HEK293 (cell line): ENCODE measurements at regions of chr5 and their contacts with region 1.

Region 1: GRCh38 chr5:181223058-181223728 is at the start of gene TRIM41:
- H3K4me3 ChIP-seq: peak within 1 kb of the TSS; percentile 92
- H3K27ac ChIP-seq: peak within 1 kb of the TSS; percentile 85
- H3K4me1 ChIP-seq: no peaks in the 10 kb centered on the region
- CTCF ChIP-seq: peak; percentile 39; the same call in 1 of the 2 replicates

Region 2: DNA sequence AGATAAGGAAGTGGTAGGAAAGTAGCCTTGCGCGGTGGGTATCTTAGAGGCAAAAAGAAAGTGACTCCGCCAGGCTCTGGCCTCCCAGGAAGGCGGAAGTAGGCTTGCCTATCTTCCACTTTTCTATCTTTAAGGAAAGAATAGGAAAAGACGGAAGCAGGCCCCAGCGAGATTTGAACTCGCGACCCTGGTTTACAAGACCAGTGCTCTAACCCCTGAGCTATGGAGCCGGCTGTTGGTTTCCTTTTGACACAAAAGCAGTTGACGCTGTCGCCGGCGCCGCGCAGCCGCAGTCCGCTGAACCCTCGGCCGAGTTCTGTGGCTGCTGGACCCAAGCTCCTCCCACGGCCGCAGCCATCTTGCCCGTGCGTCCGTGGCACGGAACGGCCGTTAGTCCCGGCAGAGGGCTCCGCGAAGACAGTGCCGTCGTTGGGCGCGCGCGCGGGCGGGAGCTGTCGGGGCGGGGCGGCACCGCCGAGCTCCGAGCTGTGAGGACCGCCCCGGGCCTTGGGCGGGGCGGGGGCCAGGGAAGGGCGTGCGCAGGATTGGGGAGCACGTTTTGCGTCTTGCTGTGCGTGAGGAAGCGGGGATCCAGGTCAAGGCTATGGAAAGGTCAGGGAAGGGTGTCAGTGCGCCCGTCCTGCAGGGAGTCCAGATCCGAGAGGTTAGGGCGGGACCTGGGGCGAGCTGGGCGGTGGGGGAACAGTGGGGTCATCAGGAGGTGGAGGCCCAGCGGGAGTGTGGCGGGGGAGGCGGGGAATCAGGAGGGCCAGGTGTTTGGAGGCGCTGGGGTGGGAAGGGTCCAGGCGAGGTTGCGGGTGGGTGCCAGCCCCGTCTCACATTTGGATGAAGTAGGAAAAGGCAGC is 31.4 kb before region 1 on chr5:
- CTCF ChIA-PET with region 1: interaction called, 3 read pairs
- POLR2A ChIA-PET with region 1: interaction called, 29 read pairs
- H3K4me3 ChIP-seq: peak overlapping the region; percentile 75
- H3K27ac ChIP-seq: peak overlapping the region; percentile 59; the same call in 1 of the 2 replicates
- H3K4me1 ChIP-seq: no peaks in the 10 kb centered on the region
- CTCF ChIP-seq: no peak; the same call in 1 of the 2 replicates

Region 3: GRCh38 chr5:181207214-181208107 is 15.7 kb before region 1 on chr5:
- CTCF ChIA-PET with region 1: interaction called, 4 read pairs
- POLR2A ChIA-PET with region 1: interaction called, 25 read pairs
- H3K4me3 ChIP-seq: peak overlapping the region; percentile 61
- H3K27ac ChIP-seq: peak overlapping the region; percentile 35
- H3K4me1 ChIP-seq: no peaks in the 10 kb centered on the region
- CTCF ChIP-seq: peak; percentile 16; the same call in 1 of the 2 replicates

Region 4: DNA sequence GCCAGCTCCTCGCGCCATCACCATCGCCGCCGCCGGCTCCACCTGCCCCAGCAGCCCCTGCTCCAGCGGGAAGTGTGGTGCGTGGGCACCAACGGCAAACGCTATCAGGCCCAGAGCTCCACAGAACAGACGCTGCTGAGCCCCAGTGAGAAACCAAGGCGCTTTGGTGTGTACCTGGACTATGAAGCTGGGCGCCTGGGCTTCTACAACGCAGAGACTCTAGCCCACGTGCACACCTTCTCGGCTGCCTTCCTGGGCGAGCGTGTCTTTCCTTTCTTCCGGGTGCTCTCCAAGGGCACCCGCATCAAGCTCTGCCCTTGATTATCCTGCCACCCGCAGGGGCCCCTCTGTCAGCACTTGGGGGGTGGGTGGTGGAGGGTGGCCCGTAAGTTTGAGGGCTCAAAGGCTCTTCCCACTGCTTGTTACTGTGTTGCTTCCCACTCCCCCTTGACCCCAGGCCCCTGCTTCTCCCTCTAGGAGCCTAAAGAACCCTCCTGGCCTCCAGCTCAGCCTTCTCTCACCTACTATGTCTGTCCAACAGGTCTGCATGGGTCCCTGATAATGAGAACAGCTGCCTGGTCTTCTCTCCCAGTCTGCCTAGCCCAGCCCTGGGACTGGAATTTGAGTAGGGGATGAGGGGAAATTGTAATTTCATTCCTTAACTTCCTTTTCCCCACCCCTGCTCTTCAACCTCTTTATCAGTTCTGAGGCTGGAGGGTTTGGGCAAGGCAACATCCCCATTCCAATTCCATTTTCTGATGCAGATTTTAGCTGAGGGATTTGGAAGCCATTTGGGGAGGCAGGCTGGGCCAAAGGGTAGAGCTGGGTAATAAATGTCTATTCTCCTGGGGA is 11.5 kb after region 1 on chr5:
- CTCF ChIA-PET with region 1: interaction called, 4 read pairs
- POLR2A ChIA-PET with region 1: interaction called, 49 read pairs
- H3K4me3 ChIP-seq: no peak overlapping the region
- H3K27ac ChIP-seq: no peak overlapping the region
- H3K4me1 ChIP-seq: no peaks in the 10 kb centered on the region
- CTCF ChIP-seq: no peak

Region 5: GRCh38 chr5:181243512-181244343 is 20.5 kb after region 1 on chr5 and contains the start of gene RACK1:
- CTCF ChIA-PET with region 1: no interaction called
- POLR2A ChIA-PET with region 1: interaction called, 39 read pairs
- H3K4me3 ChIP-seq: peak within 1 kb of the TSS; percentile 98
- H3K27ac ChIP-seq: peak within 1 kb of the TSS; percentile 99
- H3K4me1 ChIP-seq: no peaks in the 10 kb centered on the region
- CTCF ChIP-seq: peak; percentile 35